Mammary epithelial cell (primary cell): ENCODE measurements at regions of chr13 and their contacts with region 1.

Region 1: DNA sequence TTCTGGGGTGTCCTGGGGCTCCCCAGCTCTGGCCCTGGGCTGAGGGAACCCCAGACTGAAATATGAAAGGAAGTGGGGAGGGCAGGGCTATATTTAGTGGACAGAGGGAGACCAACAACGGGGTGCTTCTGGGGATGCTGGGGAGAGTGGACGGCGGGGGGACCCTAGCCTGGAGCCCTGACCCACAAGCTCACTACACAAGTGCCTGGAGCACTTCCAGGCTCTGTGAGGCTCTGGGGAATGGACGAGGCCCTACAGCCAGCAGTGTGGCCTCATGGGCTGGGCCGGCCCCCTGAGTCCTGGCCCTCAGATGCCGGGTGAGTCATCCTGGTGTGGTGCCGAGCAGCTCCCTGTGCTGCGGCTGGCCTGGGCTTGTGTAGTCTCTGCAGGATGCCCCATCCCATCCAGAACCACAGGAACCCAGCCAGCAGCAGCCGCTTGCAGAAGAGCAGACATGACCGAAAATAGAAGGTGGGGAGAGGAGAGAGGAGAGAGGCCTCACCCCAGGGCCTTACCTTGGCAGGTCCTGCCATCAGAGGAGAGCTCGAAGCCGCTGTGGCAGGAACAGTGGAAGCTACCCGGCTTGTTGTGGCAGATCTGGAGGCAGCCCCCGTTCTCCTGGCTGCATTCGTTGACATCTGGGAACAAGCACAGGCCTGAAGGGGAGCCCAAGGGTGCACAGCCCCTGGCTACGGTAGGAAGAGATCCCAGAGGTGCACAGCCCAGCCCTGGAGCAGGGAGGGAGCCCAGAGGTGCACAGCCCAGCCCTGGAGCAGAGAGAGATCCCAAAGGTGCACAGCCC is 26.1 kb downstream of the GAS6 start:
- DNase-seq: peak; percentile 98
- H3K4me3 ChIP-seq: peak overlapping the region in 2 of 3 experiments; percentile 48 to 50
- H3K27ac ChIP-seq: peak overlapping the region; percentile 95
- H3K4me1 ChIP-seq: peaks cover 47% of the 10 kb centered on the region
- H3K27me3 ChIP-seq: no peaks in the 10 kb centered on the region
- CTCF ChIP-seq: no peak

Region 2: DNA sequence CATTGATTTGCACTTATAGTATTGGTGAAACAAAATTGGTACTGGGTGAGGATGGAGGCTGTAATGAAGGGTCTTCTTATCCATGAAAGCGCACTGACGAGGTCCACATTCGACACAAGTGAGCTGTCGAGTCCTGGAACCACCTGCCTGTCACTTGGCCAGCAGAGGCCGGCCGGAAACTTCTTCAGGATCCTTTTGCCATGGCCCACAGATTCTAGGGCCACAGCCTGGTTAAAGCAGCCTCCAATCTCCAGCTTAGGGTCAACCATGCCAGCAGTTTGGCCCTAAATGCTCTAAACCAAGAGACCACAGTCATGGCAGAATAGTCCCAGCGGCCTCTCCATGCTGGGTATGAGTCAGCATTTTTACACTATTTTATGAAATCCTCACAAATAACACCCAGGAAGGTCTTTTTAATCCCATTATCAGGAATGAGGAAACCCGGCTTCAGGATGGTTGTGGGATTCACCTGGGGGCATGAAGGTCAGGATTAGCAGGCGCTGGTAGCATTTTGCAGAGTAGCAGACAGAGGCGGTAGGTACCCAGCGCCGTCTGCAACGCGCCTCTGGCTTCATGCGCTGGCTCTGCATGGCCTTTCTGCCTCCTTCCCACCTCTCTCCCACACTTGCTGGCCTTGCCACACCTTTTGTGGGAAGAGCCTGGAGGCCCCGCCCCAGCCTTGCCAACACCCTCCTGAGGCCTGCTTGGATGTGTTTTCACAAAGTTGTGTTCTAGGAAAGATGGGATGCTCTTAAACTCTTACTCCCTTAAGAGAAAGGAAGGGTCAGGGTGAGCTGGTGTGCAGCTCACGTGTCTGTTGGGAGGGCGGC is 10.9 kb after region 1 on chr13:
- CTCF ChIA-PET with region 1: no interaction called
- dilution Hi-C with region 1: no loop called
- in situ Hi-C with region 1: no loop called
- intact Hi-C with region 1: loop called (anchors 1 kb)
- DNase-seq: peak; percentile 72
- H3K4me3 ChIP-seq: no peak overlapping the region
- H3K27ac ChIP-seq: peak overlapping the region; percentile 78
- H3K4me1 ChIP-seq: peaks cover 37% of the 10 kb centered on the region
- H3K27me3 ChIP-seq: no peaks in the 10 kb centered on the region
- CTCF ChIP-seq: no peak

Region 3: GRCh38 chr13:113897161-113897560 is 59.4 kb after region 1 on chr13:
- CTCF ChIA-PET with region 1: no interaction called
- dilution Hi-C with region 1: no loop called
- in situ Hi-C with region 1: no loop called
- intact Hi-C with region 1: loop called (anchors 2 kb)
- DNase-seq: peak; percentile 94
- H3K4me3 ChIP-seq: no peak overlapping the region
- H3K27ac ChIP-seq: peak overlapping the region; percentile 87
- H3K4me1 ChIP-seq: peaks cover 30% of the 10 kb centered on the region
- H3K27me3 ChIP-seq: no peaks in the 10 kb centered on the region
- CTCF ChIP-seq: no peak